ENCODE measurements at regions of chr1 and their contacts with region 1.

Region 1: DNA sequence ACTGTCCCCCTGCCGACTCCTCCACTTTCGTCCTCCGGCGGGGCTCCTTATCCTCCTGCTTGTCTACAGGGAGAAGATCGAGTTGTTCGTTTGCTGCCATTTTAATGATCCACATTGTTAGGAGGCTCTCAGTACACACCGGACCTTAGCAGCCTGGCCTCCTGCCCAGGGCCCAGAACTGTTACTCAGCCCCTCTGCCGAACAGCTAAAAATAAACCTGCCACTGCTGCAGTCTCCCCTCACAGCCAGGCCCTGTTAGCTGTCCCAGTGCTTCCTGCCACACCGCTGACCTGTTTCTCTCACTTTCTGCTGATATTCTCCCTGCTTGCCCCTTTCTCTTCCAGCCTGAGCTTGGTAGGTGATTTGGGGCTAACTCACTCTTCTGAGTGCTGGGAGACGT is 8.3 kb downstream of the MAPKAPK2 start:
- DNase-seq: no peak
- ATAC-seq: no peak
- H3K4me3 ChIP-seq: no peak overlapping the region
- H3K4me3 Mint-ChIP-seq: no peak overlapping the region
- H3K27ac ChIP-seq: no peak overlapping the region
- H3K27ac Mint-ChIP-seq: peak overlapping the region; percentile 67
- H3K4me1 ChIP-seq: peaks cover 33 to 36% of the 10 kb centered on the region in 2 donors
- H3K4me1 Mint-ChIP-seq: peaks cover 88% of the 10 kb centered on the region
- H3K27me3 ChIP-seq: no peaks in the 10 kb centered on the region
- H3K27me3 Mint-ChIP-seq: no peaks in the 10 kb centered on the region
- CTCF ChIP-seq: no peak

Region 2: GRCh38 chr1:206575165-206575893 is 117.7 kb before region 1 on chr1:
- CTCF ChIA-PET with region 1: no interaction called
- POLR2A ChIA-PET with region 1: no interaction called
- intact Hi-C with region 1: no loop called
- DNase-seq: peak; percentile 84
- ATAC-seq: peak; percentile 38
- H3K4me3 ChIP-seq: peak overlapping the region; percentile 2 to 49 (median 26)
- H3K4me3 Mint-ChIP-seq: peak overlapping the region; percentile 86
- H3K27ac ChIP-seq: peak overlapping the region; percentile 86 to 96
- H3K27ac Mint-ChIP-seq: peak overlapping the region; percentile 98
- H3K4me1 ChIP-seq: peaks cover 80 to 89% of the 10 kb centered on the region in 2 donors
- H3K4me1 Mint-ChIP-seq: peaks cover 92% of the 10 kb centered on the region
- H3K27me3 ChIP-seq: no peaks in the 10 kb centered on the region
- H3K27me3 Mint-ChIP-seq: no peaks in the 10 kb centered on the region
- CTCF ChIP-seq: no peak

Region 3: DNA sequence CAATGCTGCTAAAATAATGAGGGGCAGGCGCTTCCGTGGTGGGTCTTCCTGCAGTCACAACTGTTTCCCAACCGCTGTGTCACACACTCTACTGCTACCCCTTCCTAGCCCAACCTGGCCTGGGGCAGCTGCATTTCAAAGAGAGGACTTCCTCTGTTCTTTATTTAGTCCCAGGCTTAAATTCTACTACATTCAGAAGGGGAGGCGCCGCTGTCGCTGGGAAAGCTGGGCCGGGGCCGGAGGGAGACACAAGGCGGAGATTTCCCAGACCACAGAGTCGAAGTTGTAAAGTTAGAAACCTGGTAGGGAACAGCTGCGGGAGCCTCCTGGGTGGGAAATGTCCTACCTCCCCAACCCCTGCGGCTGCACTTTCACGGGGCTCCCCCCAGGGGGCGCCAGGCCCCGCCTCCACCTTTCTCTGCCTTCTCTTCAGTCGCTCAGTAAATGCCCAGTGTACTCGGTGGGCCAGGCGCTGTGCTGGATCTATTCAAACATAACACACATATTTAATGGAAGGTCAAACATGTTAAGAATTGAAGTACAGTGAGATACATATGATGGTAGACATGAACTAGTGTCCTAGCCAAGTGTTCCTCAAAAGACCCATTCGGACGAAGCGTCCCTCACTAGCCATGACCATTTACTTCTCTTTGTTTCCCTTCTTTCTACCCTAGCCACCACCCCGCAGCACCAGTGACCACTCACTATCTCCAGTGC is 34.6 kb before region 1 on chr1:
- CTCF ChIA-PET with region 1: interaction called, 21 read pairs
- POLR2A ChIA-PET with region 1: interaction called, 3 read pairs
- intact Hi-C with region 1: no loop called
- DNase-seq: peak; percentile 72
- ATAC-seq: peak; percentile 85
- H3K4me3 ChIP-seq: peak overlapping the region in 3 of 5 experiments; percentile 8 to 51 (median 12)
- H3K4me3 Mint-ChIP-seq: peak overlapping the region; percentile 49
- H3K27ac ChIP-seq: no peak overlapping the region
- H3K27ac Mint-ChIP-seq: peak overlapping the region; percentile 1
- H3K4me1 ChIP-seq: peaks cover 16 to 17% of the 10 kb centered on the region in 2 donors
- H3K4me1 Mint-ChIP-seq: peaks cover 21% of the 10 kb centered on the region
- H3K27me3 ChIP-seq: peaks cover 0 to 34% (median 11%) of the 10 kb centered on the region in 4 experiments
- H3K27me3 Mint-ChIP-seq: peaks cover 30% of the 10 kb centered on the region
- CTCF ChIP-seq: peak; percentile 96

Region 4: DNA sequence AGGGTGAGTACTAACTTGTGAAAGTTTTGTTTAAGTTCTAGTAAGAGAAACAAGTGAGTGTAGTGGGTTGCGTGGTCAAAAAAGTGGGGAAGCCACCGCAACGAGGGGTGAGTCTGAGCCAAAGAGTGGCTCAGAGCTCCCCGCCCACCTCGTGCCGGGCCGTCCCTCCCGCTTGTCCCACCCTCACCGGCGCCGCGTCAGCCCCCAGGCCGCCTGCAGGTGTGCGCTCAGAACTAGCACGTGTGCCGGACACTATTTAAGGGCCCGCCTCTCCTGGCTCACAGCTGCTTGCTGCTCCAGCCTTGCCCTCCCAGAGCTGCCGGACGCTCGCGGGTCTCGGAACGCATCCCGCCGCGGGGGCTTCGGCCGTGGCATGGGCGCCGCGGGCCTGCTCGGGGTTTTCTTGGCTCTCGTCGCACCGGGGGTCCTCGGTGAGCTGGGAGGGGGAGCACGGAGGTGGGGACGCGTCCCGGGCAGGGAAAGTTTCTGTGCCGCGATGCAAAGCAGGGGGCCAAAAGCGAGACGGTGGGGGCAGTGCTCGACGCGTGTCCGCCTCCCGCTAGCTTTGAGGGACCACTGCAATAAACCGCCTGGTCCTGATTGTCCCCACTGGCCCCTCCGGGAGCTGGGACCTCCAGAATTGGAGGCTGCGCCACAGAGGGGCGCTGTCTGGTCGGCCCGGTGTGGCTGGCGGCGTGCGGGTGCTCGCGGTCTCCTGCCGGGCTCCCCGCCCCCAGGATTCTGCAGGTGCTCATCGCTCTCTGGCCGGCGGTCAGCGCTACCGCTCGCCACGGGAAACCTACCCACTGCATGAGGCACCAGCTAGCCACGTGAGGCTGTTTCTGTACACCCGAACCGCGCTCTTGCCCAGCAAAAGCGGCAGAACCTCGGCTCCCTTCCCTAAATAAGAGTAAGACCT is 761.3 kb after region 1 on chr1 and contains the start of gene CR2:
- CTCF ChIA-PET with region 1: no interaction called
- POLR2A ChIA-PET with region 1: no interaction called
- intact Hi-C with region 1: no loop called
- DNase-seq: peak; percentile 89
- ATAC-seq: peak; percentile 92
- H3K4me3 ChIP-seq: peak within 1 kb of the TSS; percentile 75 to 90 (median 84)
- H3K4me3 Mint-ChIP-seq: peak within 1 kb of the TSS; percentile 86
- H3K27ac ChIP-seq: peak within 1 kb of the TSS; percentile 69 to 82
- H3K27ac Mint-ChIP-seq: peak within 1 kb of the TSS; percentile 79
- H3K4me1 ChIP-seq: peaks cover 44 to 46% of the 10 kb centered on the region in 2 donors
- H3K4me1 Mint-ChIP-seq: peaks cover 15% of the 10 kb centered on the region
- H3K27me3 ChIP-seq: no peaks in the 10 kb centered on the region
- H3K27me3 Mint-ChIP-seq: no peaks in the 10 kb centered on the region
- CTCF ChIP-seq: peak; percentile 75
- total RNA-seq, gene CR2: 28.1 and 30.5 TPM in 2 replicates